ENCODE measurements at regions of chr2 and their contacts with region 1.

Region 1: GRCh38 chr2:234544659-234545611 is 48.1 kb upstream of the ARL4C start:
- DNase-seq: peak; percentile 75
- ATAC-seq: peak; percentile 77
- H3K4me3 ChIP-seq: no peak overlapping the region
- H3K4me3 Mint-ChIP-seq: no peak overlapping the region
- H3K27ac ChIP-seq: no peak overlapping the region
- H3K27ac Mint-ChIP-seq: no peak overlapping the region
- H3K4me1 ChIP-seq: no peaks in the 10 kb centered on the region
- H3K4me1 Mint-ChIP-seq: no peaks in the 10 kb centered on the region
- H3K27me3 ChIP-seq: peaks cover 0 to 8% (median 7%) of the 10 kb centered on the region in 4 experiments
- H3K27me3 Mint-ChIP-seq: peaks cover 61% of the 10 kb centered on the region
- CTCF ChIP-seq: peak; percentile 90

Region 2: DNA sequence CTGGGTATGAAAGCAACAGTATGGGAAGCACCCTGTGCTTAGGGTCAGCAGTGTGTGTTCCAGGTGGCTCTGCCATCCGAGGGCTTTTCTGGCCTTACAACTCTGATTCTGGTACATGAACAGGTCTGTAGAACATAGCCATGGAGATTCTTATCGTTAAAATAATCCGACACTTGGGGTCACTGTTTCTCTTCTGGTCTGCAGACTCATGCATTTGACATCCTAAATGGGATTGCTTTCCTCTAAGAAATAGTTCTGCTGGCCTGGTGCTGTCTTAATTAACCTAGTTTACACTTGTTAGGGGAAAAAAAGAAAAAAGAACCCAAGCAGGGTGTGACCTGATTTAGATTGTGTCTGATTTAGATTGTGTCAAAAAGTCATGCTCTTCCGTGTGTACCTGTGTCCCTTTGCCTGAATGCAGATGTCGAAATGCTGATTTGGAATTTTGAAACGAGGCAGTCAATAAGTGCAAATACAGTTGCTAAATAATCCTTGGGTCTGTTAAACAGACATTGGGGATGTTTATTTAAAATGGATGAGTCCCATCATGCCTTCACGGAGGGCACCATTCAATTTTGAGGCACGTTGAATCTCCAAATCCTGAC is 568.1 kb before region 1 on chr2:
- CTCF ChIA-PET with region 1: interaction called, 23 read pairs
- POLR2A ChIA-PET with region 1: no interaction called
- intact Hi-C with region 1: no loop called
- DNase-seq: peak; percentile 68
- ATAC-seq: no peak
- H3K4me3 ChIP-seq: no peak overlapping the region
- H3K4me3 Mint-ChIP-seq: no peak overlapping the region
- H3K27ac ChIP-seq: no peak overlapping the region
- H3K27ac Mint-ChIP-seq: no peak overlapping the region
- H3K4me1 ChIP-seq: no peaks in the 10 kb centered on the region
- H3K4me1 Mint-ChIP-seq: no peaks in the 10 kb centered on the region
- H3K27me3 ChIP-seq: peaks cover 0 to 20% (median 8%) of the 10 kb centered on the region in 4 experiments
- H3K27me3 Mint-ChIP-seq: peaks cover 61% of the 10 kb centered on the region
- CTCF ChIP-seq: peak; percentile 67

Region 3: GRCh38 chr2:234135720-234136221 is 409.2 kb before region 1 on chr2:
- CTCF ChIA-PET with region 1: interaction called, 30 read pairs
- POLR2A ChIA-PET with region 1: no interaction called
- intact Hi-C with region 1: no loop called
- DNase-seq: peak; percentile 75
- ATAC-seq: peak; percentile 53
- H3K4me3 ChIP-seq: no peak overlapping the region
- H3K4me3 Mint-ChIP-seq: no peak overlapping the region
- H3K27ac ChIP-seq: no peak overlapping the region
- H3K27ac Mint-ChIP-seq: no peak overlapping the region
- H3K4me1 ChIP-seq: peaks cover 4 to 11% of the 10 kb centered on the region in 2 donors
- H3K4me1 Mint-ChIP-seq: peaks cover 15% of the 10 kb centered on the region
- H3K27me3 ChIP-seq: peaks cover 0 to 41% (median 17%) of the 10 kb centered on the region in 4 experiments
- H3K27me3 Mint-ChIP-seq: peaks cover 49% of the 10 kb centered on the region
- CTCF ChIP-seq: peak; percentile 86

Region 4: GRCh38 chr2:234514873-234515638 is 29.9 kb before region 1 on chr2:
- CTCF ChIA-PET with region 1: no interaction called
- POLR2A ChIA-PET with region 1: no interaction called
- intact Hi-C with region 1: no loop called
- DNase-seq: no peak
- ATAC-seq: no peak
- H3K4me3 ChIP-seq: no peak overlapping the region
- H3K4me3 Mint-ChIP-seq: no peak overlapping the region
- H3K27ac ChIP-seq: no peak overlapping the region
- H3K27ac Mint-ChIP-seq: no peak overlapping the region
- H3K4me1 ChIP-seq: no peaks in the 10 kb centered on the region
- H3K4me1 Mint-ChIP-seq: no peaks in the 10 kb centered on the region
- H3K27me3 ChIP-seq: peaks cover 0 to 12% (median 1%) of the 10 kb centered on the region in 4 experiments
- H3K27me3 Mint-ChIP-seq: peaks cover 12% of the 10 kb centered on the region
- CTCF ChIP-seq: no peak

Region 5: GRCh38 chr2:234533626-234534025 is 11.3 kb before region 1 on chr2:
- CTCF ChIA-PET with region 1: interaction called, 22 read pairs
- POLR2A ChIA-PET with region 1: no interaction called
- intact Hi-C with region 1: no loop called
- DNase-seq: no peak
- ATAC-seq: no peak
- H3K4me3 ChIP-seq: no peak overlapping the region
- H3K4me3 Mint-ChIP-seq: no peak overlapping the region
- H3K27ac ChIP-seq: no peak overlapping the region
- H3K27ac Mint-ChIP-seq: no peak overlapping the region
- H3K4me1 ChIP-seq: no peaks in the 10 kb centered on the region
- H3K4me1 Mint-ChIP-seq: no peaks in the 10 kb centered on the region
- H3K27me3 ChIP-seq: peaks cover 0 to 28% (median 6%) of the 10 kb centered on the region in 4 experiments
- H3K27me3 Mint-ChIP-seq: peaks cover 40% of the 10 kb centered on the region
- CTCF ChIP-seq: no peak

Region 6: GRCh38 chr2:234555720-234556119 is 10.8 kb after region 1 on chr2:
- CTCF ChIA-PET with region 1: interaction called, 13 read pairs
- POLR2A ChIA-PET with region 1: no interaction called
- intact Hi-C with region 1: no loop called
- DNase-seq: no peak
- ATAC-seq: no peak
- H3K4me3 ChIP-seq: no peak overlapping the region
- H3K4me3 Mint-ChIP-seq: no peak overlapping the region
- H3K27ac ChIP-seq: no peak overlapping the region
- H3K27ac Mint-ChIP-seq: no peak overlapping the region
- H3K4me1 ChIP-seq: peaks cover 10 to 12% of the 10 kb centered on the region in 2 donors
- H3K4me1 Mint-ChIP-seq: peaks cover 18% of the 10 kb centered on the region
- H3K27me3 ChIP-seq: peaks cover 0 to 3% (median 0%) of the 10 kb centered on the region in 4 experiments
- H3K27me3 Mint-ChIP-seq: peaks cover 6% of the 10 kb centered on the region
- CTCF ChIP-seq: no peak

Region 7: DNA sequence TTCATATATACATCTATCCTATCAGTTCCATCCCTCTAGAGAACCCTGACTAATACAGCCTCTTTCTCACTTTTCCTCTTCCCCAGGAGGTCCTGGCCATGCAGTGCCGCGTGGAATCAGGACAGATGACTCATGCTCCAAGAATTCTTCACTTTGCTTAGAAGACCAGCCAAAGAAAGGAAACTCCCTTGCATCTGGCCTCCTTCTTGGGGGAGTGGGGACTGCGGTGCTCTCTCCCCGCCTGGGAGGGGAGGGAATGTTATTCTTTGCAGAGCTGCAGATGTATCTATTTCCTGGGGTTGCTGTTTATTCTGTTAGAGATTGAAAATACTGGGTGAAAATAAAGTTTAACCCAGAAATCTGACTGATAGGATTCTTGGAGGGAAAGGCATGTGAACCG is 295.4 kb after region 1 on chr2:
- CTCF ChIA-PET with region 1: no interaction called
- POLR2A ChIA-PET with region 1: no interaction called
- intact Hi-C with region 1: no loop called
- DNase-seq: no peak
- ATAC-seq: no peak
- H3K4me3 ChIP-seq: no peak overlapping the region
- H3K4me3 Mint-ChIP-seq: no peak overlapping the region
- H3K27ac ChIP-seq: no peak overlapping the region
- H3K27ac Mint-ChIP-seq: no peak overlapping the region
- H3K4me1 ChIP-seq: no peaks in the 10 kb centered on the region
- H3K4me1 Mint-ChIP-seq: no peaks in the 10 kb centered on the region
- H3K27me3 ChIP-seq: peaks cover 0 to 4% (median 0%) of the 10 kb centered on the region in 4 experiments
- H3K27me3 Mint-ChIP-seq: peaks cover 31% of the 10 kb centered on the region
- CTCF ChIP-seq: no peak

Region 8: GRCh38 chr2:235106874-235107639 is 562.1 kb after region 1 on chr2:
- CTCF ChIA-PET with region 1: interaction called, 18 read pairs
- POLR2A ChIA-PET with region 1: no interaction called
- intact Hi-C with region 1: loop called (anchors 1 kb)
- DNase-seq: peak; percentile 53
- ATAC-seq: no peak
- H3K4me3 ChIP-seq: no peak overlapping the region
- H3K4me3 Mint-ChIP-seq: no peak overlapping the region
- H3K27ac ChIP-seq: no peak overlapping the region
- H3K27ac Mint-ChIP-seq: no peak overlapping the region
- H3K4me1 ChIP-seq: no peaks in the 10 kb centered on the region
- H3K4me1 Mint-ChIP-seq: no peaks in the 10 kb centered on the region
- H3K27me3 ChIP-seq: peaks cover 0 to 4% (median 0%) of the 10 kb centered on the region in 4 experiments
- H3K27me3 Mint-ChIP-seq: peaks cover 4% of the 10 kb centered on the region
- CTCF ChIP-seq: peak; percentile 46

Region 9: DNA sequence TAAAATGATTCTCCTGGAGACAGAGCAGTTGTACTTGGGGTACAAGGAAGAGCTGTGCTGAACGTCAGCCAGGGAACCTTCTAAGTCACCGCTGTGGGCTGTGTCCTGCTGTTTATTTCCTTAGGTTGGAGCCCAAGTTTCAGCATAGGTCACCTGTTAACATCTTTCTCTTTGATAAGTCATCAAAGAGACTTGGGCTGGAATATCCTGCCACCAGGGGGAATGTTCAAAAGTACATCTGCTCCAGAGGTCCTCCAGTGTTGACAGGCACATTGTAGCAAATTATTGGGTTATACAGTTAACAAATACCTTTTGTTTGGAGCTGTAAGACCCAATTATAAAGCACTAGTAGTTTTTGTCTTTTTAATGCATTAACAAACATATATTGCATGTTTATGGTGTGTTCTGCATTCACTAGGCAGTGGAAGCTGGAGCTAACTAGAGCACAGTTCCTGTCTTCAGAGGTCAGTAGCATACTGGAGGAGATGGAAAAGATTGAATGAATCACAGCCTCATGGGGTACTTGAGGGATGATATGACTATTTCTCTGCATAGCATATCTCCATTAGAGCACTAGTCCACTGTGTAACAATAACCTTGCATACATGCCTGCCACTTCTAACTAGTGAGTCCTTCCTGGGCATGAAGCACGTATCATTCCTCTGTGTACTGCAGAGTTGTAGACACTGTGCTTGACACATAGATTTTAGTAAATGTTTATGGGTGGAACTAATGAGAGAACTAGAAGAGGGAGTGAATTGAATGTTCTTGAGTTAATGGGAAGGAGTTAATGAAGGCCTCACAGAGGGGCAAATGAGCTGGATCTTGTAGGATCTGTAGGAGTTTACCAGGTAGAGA is 1131.0 kb after region 1 on chr2:
- CTCF ChIA-PET with region 1: no interaction called
- POLR2A ChIA-PET with region 1: no interaction called
- intact Hi-C with region 1: no loop called
- DNase-seq: no peak
- ATAC-seq: no peak
- H3K4me3 ChIP-seq: no peak overlapping the region
- H3K4me3 Mint-ChIP-seq: no peak overlapping the region
- H3K27ac ChIP-seq: no peak overlapping the region
- H3K27ac Mint-ChIP-seq: no peak overlapping the region
- H3K4me1 ChIP-seq: no peaks in the 10 kb centered on the region
- H3K4me1 Mint-ChIP-seq: peaks cover 6% of the 10 kb centered on the region
- H3K27me3 ChIP-seq: no peaks in the 10 kb centered on the region
- H3K27me3 Mint-ChIP-seq: peaks cover 43% of the 10 kb centered on the region
- CTCF ChIP-seq: no peak

Measured in B cell (primary cell).